RWPE1 (cell line): ENCODE measurements at regions of chr7 and their contacts with region 1.

Region 1: GRCh38 chr7:151087245-151088018 is 1.2 kb downstream of the AGAP3 start:
- DNase-seq: peak; percentile 44
- H3K27ac ChIP-seq: peak overlapping the region; percentile 90
- CTCF ChIP-seq: peak; percentile 76

Region 2: DNA sequence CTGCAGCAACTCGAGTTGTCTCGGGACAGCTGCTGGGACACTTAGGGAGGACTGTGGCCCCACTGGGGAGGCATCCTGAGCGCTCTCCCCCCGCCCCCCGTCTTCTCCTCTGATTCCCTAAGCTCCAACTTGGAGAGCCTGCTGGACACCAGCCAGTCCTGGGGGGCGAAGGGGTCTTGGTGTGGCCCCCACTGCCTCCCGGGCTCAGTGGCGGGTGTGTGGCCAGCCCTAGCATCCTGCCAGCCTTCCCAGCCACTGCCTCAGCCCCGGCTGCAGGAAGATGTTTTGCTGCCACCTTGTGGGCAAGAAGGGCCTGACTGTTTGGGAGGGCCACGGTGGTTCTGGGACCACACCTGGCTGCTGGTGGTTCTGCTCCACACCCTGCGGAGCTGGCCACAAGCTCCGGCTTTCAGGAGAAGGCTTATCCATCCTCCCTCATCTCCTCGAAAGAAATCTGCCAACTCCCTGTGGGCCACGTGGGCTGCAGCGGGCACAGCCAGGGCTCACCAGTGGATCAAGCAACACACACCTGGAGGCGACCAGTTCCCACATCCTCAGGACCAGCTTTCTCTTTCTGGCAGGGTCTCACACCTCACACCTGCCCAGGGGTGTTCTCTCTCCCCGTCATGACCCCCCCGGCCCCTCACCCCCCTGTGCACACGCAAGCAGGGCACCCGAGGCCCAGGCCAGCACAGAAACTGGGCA is 23.7 kb after region 1 on chr7:
- CTCF ChIA-PET with region 1: interaction called, 17 read pairs
- POLR2A ChIA-PET with region 1: no interaction called
- DNase-seq: peak; percentile 68
- H3K27ac ChIP-seq: peak overlapping the region; percentile 91
- CTCF ChIP-seq: peak; percentile 96

Region 3: GRCh38 chr7:151181011-151181431 is 93.6 kb after region 1 on chr7:
- CTCF ChIA-PET with region 1: no interaction called
- POLR2A ChIA-PET with region 1: no interaction called
- DNase-seq: no peak
- H3K27ac ChIP-seq: no peak overlapping the region
- CTCF ChIP-seq: no peak

Region 4: DNA sequence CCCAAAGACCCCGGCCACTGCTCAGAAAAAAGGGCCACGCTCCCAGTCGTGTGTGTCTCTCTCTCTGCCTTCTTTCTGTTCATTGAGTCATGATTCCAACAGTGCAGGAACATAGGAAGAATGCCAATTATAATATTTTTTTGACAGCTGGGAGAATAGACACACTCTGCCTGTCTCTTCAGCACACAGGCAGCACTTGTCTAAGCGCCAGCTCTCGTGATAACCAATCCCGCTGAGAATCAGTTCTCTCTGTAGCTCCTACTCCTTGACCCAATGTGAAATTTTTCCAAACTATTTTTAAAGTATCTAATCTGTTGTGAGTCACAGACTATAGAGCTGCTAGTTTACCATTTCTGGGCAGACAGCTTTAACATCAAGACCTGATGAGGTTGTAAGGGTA is 577.9 kb after region 1 on chr7:
- CTCF ChIA-PET with region 1: no interaction called
- POLR2A ChIA-PET with region 1: no interaction called
- DNase-seq: no peak
- H3K27ac ChIP-seq: no peak overlapping the region
- CTCF ChIP-seq: no peak